Activated CD4-positive, alpha-beta memory T cell treated with anti-CD3 and anti-CD28 coated beads for 36 hours (primary cell): ENCODE measurements at regions of chr15 and their contacts with region 1.

Region 1: DNA sequence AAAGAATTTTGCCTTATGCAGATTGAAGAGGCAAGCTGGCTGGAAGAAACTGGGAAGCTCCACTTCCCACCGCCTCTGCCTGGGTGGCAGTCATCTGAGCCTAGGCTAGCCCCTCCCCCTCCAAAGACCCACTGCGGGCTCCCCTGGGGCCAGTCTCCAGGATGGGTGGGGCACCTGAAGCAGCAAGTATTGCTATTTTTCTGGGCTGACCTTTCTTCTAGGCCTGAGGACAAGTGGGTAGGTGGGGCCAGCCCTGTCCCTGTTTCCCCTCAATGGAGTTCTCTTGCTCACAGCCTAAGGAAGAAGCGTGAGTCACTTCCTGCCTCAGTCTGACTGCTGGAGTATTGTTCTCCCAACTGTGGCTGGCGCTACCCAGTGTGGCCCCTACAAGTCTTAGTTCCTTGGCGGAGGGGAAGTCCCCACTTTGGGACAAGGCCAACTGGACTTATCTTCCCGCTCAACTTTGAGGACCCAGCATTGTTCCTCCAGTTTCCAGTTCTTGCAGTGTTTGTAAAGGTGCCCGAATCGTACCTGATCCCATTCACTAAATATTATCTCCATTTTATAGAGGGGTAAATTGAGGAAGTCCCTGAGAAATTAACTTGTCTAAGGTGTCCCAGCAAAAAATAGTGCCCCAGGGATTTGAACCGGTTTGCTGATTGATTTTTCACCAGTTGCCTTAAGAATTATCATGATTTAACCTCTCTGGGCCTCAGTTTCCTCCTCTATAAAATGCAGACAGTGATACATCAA is 1.4 kb downstream of the FURIN start:
- DNase-seq: peak; percentile 81
- H3K4me3 Mint-ChIP-seq: peak overlapping the region; percentile 91
- H3K27ac Mint-ChIP-seq: peak overlapping the region; percentile 97
- H3K4me1 Mint-ChIP-seq: peaks cover 56% of the 10 kb centered on the region
- H3K27me3 Mint-ChIP-seq: no peaks in the 10 kb centered on the region

Region 2: GRCh38 chr15:90716976-90717821 is 152.6 kb before region 1 on chr15 and contains the start of gene BLM:
- CTCF ChIA-PET with region 1: interaction called, 3 read pairs
- POLR2A ChIA-PET with region 1: interaction called, 9 read pairs
- intact Hi-C with region 1: loop called (anchors 1 kb)
- DNase-seq: peak; percentile 97
- H3K4me3 Mint-ChIP-seq: peak within 1 kb of the TSS; percentile 84
- H3K27ac Mint-ChIP-seq: peak within 1 kb of the TSS; percentile 91
- H3K4me1 Mint-ChIP-seq: peaks cover 24% of the 10 kb centered on the region
- H3K27me3 Mint-ChIP-seq: no peaks in the 10 kb centered on the region
- total RNA-seq, gene BLM: 65.6 to 68.7 TPM

Region 3: DNA sequence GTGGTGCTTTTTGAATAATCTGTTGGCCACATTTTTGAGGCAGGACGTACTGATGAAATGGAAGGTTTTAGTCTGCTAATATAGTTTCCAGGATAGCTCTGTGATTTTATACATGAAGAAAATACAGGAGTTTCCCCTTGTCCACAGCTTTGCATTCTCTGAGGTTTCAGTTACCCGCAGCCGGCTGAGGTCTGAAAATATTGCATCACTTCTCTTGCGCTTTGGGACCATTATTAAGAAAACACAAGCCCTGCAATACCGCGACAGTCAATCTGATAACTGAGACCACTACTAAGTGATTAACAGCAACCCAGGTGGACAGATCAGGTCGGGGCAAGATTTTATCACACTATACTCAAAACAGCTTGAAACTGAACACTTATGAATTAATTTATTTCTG is 119.6 kb before region 1 on chr15:
- CTCF ChIA-PET with region 1: no interaction called
- POLR2A ChIA-PET with region 1: no interaction called
- intact Hi-C with region 1: loop called (anchors 1 kb)
- DNase-seq: peak; percentile 73
- H3K4me3 Mint-ChIP-seq: peak overlapping the region; percentile 39
- H3K27ac Mint-ChIP-seq: peak overlapping the region; percentile 87
- H3K4me1 Mint-ChIP-seq: peaks cover 26% of the 10 kb centered on the region
- H3K27me3 Mint-ChIP-seq: no peaks in the 10 kb centered on the region

Region 4: DNA sequence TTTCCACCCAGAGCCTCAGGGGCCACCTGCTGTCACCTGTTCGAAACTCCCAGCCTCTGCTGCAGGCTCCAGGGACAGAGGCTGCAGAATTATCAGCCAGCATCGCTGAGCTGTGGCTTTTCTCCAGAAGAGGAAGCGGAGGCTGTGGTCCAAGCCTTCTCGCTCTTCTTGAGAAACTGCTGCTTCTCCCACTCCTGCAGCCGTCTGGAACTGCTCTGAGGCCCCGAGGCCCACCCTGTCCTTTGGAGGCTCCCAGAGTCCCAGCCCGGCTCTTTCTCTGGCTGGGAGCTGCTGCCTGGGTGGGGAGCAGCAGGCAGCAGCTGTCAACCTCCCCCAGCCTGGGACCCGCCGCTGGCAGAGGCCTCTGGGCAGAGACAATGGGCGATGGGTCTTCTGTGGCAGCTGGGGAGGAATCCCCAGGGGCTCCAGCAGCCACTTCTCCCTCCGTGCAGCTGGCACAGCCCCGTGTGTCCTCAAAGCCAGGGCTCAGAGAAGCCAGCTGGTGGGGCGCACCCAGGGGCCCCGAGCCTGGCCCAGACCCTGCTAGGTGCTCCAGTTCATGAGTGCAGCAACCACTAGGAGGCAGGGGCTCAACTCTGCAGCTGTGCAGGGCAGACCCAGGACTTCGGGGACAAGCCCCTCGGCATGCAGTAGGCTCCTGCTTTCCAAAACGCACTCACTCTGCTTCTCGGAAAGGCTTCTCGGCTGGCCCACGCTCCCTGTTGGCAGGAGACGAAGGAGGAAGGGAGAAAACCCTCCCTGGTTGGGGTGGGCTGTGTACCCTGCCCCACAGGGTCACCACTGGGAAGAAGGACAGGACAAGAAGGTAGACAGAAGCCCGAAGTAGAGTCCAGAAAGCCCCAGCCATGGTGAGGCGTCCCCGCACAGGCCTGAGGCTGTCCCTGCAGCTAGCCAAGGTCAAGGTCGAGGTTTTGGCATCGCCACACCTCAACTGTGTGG is 51.2 kb before region 1 on chr15:
- CTCF ChIA-PET with region 1: interaction called, 3 read pairs
- POLR2A ChIA-PET with region 1: interaction called, 14 read pairs
- intact Hi-C with region 1: loop called (anchors 1 kb)
- DNase-seq: peak; percentile 62
- H3K4me3 Mint-ChIP-seq: peak overlapping the region; percentile 20
- H3K27ac Mint-ChIP-seq: peak overlapping the region; percentile 86
- H3K4me1 Mint-ChIP-seq: peaks cover 51% of the 10 kb centered on the region
- H3K27me3 Mint-ChIP-seq: no peaks in the 10 kb centered on the region

Region 5: GRCh38 chr15:90829942-90830440 is 39.8 kb before region 1 on chr15:
- CTCF ChIA-PET with region 1: interaction called, 3 read pairs
- POLR2A ChIA-PET with region 1: interaction called, 20 read pairs
- intact Hi-C with region 1: loop called (anchors 1 kb)
- DNase-seq: peak; percentile 91
- H3K4me3 Mint-ChIP-seq: peak overlapping the region; percentile 59
- H3K27ac Mint-ChIP-seq: peak overlapping the region; percentile 100
- H3K4me1 Mint-ChIP-seq: peaks cover 39% of the 10 kb centered on the region
- H3K27me3 Mint-ChIP-seq: no peaks in the 10 kb centered on the region

Region 6: DNA sequence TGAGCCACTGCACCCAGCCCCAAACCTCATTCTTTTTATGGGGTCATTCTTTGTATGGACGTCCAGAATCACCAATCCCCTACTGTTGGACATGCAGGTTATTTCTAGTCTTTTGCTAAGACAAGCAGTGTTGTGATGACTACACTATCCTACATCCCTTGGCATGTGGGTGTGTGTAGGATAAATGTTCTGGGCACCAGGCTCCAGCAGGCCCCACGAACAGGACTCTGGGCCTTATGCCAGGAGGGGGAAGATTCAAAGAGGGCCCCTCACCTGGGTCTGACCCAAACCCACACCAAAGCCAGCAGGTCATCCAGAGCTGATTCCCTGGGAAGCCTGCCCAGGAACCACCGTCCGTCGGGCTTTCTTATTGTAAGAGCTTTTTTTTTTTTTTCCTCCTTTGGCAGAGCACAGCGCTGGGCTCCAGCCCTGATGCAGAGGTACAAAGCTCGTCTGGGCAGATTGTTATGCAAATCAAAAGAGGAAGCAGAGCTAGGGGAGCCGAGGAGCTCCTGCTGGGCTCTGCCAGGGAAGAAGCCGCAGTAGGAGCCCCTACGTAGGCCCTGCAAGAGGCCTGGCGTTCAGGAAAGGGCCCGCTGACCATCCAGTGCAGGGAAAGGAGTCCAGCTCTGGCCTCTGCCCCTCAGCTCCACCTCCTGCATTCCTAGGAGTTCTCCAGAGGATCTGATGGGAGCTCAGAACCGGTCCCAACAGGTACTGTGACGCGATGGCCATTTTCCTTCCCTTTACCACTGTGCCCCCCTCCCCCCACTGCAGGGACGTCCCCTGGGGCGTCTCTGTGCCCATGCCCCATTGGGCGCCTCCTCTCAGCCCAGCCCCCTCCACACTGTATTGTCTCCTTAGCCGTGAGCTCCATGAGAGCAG is 30.3 kb before region 1 on chr15:
- CTCF ChIA-PET with region 1: interaction called, 7 read pairs
- POLR2A ChIA-PET with region 1: interaction called, 63 read pairs
- intact Hi-C with region 1: loop called (anchors 1 kb)
- DNase-seq: peak; percentile 61
- H3K4me3 Mint-ChIP-seq: peak overlapping the region; percentile 69
- H3K27ac Mint-ChIP-seq: peak overlapping the region; percentile 94
- H3K4me1 Mint-ChIP-seq: peaks cover 57% of the 10 kb centered on the region
- H3K27me3 Mint-ChIP-seq: no peaks in the 10 kb centered on the region

Region 7: GRCh38 chr15:91320101-91320500 is 450.3 kb after region 1 on chr15:
- CTCF ChIA-PET with region 1: no interaction called
- POLR2A ChIA-PET with region 1: no interaction called
- intact Hi-C with region 1: no loop called
- DNase-seq: no peak
- H3K4me3 Mint-ChIP-seq: no peak overlapping the region
- H3K27ac Mint-ChIP-seq: peak overlapping the region; percentile 43
- H3K4me1 Mint-ChIP-seq: peaks cover 42% of the 10 kb centered on the region
- H3K27me3 Mint-ChIP-seq: no peaks in the 10 kb centered on the region